Aorta (tissue), 5 donors: ENCODE measurements at regions of chr9 and their contacts with region 1.

Region 1: DNA sequence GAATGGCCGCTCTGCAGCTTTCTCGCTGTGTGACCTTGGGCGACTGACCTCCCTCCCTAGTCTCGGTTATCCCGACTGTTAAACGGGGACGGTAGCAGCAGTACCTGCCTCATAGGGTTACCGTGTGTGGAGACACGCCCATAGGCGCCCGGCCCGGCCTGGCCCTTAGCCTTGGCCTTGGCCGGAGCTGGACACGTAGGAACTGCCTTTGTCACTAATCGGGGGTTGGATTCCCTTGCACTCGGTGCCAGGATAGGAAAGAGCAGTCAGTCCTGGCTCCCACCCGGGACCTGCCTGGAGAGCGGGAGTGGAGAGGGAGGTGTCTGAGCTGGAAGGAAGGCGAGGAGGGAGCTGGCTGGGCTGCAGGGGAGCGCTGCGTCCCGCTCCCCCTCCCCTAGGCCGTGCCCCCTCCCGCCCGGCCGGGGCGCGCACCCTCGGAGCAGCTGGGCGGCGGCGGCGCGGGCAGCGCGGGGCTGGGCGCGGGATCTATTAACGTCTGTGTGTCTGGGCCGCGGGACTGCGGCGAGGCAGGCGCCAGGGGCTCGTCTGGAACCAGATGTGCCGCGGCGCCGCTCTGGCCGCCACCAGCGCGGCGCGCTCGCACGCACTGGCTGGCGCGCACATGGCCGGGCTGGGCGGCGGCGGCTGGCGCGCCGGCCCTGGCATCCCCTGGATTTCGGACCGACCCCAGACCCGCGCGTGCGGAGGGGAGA is 31.6 kb downstream of the PRRX2 start:
- DNase-seq: peak; percentile 88 to 93
- ATAC-seq: peak; percentile 61
- H3K4me3 ChIP-seq: peak overlapping the region; percentile 5 to 16
- H3K27ac ChIP-seq: peak overlapping the region; percentile 88 to 99
- H3K4me1 ChIP-seq: peaks cover 4 to 5% of the 10 kb centered on the region in 2 donors
- H3K27me3 ChIP-seq: no peaks in the 10 kb centered on the region

Region 2: DNA sequence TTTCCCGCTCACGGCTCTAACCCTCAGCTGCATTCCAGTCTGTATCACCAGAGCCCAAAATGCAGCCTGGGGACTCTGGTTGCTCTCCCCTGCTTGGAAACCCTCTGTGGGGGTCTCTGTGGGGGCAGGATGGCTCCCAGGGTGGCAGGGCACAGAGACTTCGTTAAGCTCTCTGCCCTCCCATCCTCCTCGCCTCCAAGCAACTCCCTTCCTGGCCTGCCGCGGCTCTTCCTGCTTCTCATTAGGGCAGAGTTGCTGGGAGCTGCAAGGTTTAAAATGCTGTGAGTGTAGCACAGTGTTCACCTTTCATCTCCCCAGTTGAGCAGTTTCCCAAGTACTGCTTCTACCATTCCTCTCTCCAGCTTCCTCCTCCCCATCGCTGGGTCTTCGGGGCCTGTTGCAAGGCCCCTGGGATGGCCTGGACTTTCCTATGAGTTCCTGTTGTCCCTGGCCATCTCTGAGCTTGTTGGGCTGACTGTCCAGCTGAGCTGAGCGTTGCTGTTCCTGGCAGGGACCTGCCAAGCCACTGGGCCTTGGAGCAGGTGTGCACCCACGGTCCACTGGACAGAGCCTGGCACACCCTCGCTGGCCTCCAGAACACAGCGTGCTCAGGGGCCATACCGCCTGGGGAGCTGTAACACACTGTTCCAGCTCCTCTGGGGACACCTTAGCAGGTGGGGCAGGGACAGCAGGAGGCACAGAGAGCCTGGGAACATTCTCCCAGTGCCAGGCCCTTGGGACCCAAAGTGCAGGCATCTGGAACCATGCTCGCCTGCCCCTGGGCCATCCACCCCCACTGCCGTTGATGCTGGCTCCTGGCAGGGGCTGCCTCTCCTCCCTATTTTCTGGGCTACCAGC is 264.6 kb before region 1 on chr9:
- intact Hi-C with region 1: no loop called
- DNase-seq: no peak
- ATAC-seq: no peak
- H3K4me3 ChIP-seq: no peak overlapping the region
- H3K27ac ChIP-seq: no peak overlapping the region
- H3K4me1 ChIP-seq: no peaks in the 10 kb centered on the region
- H3K27me3 ChIP-seq: no peaks in the 10 kb centered on the region

Region 3: GRCh38 chr9:129648092-129648763 is 48.9 kb before region 1 on chr9:
- intact Hi-C with region 1: loop called in 1 of 2 experiments (anchors 5 kb)
- DNase-seq: peak; percentile 75 to 91
- ATAC-seq: peak; percentile 80
- H3K4me3 ChIP-seq: no peak overlapping the region
- H3K27ac ChIP-seq: peak overlapping the region; percentile 2 to 55
- H3K4me1 ChIP-seq: no peaks in the 10 kb centered on the region
- H3K27me3 ChIP-seq: no peaks in the 10 kb centered on the region

Region 4: GRCh38 chr9:129665389-129665775 is 31.7 kb before region 1 on chr9 and contains the start of gene PRRX2:
- intact Hi-C with region 1: loop called in 1 of 2 experiments (anchors 2 kb)
- DNase-seq: peak; percentile 83 to 91
- ATAC-seq: peak; percentile 80
- H3K4me3 ChIP-seq: peak within 1 kb of the TSS; percentile 85 to 95
- H3K27ac ChIP-seq: peak within 1 kb of the TSS; percentile 52 to 59
- H3K4me1 ChIP-seq: no peaks in the 10 kb centered on the region
- H3K27me3 ChIP-seq: no peaks in the 10 kb centered on the region
- total RNA-seq, gene PRRX2: 51.9 to 68.8 TPM

Region 5: GRCh38 chr9:129712634-129713401 is 15.7 kb after region 1 on chr9:
- intact Hi-C with region 1: loop called in 1 of 2 experiments (anchors 1 kb)
- DNase-seq: peak; percentile 69 to 87
- ATAC-seq: peak; percentile 15
- H3K4me3 ChIP-seq: no peak overlapping the region
- H3K27ac ChIP-seq: peak overlapping the region; percentile 81 to 88
- H3K4me1 ChIP-seq: peaks cover 4% of the 10 kb centered on the region in 2 donors
- H3K27me3 ChIP-seq: no peaks in the 10 kb centered on the region

Region 6: DNA sequence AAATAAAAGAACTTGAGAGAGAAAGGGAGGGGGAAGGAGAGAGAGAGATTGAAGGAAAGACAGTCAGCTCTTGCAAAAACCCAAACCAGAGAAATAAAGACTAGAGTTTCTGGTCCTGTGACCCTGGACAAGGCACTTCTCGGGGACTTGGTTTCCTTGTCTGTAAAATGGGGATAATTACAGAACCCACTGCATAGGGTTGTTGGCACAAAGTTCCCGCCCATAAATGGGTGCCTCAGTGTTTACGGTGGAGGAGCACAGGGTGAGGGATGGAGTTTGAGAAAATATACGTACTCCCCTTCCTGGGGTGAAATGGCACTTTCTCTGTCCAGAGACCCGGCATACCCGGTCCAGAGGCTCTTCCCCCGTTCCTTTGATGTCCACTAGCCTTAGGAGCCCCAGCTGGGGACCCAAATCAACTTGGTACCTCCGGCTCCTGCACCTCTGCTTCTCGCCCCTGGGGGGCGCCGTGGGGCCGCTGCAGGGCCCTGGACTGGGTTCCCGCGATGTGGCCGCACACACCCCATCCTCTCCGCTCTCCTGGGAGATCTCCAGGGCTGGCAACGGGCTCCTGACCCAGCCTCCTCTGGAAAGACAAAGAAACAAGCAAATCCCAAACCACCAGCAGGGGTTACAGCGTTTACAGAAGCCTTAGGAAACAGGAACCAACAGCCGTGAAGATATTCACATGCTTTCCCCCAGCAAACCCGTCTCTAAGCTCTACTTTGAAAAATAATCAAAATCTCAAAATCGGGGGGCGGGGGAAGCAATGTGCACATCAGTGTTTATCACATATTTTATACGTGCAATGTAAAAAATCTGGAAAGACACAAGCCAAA is 29.4 kb after region 1 on chr9:
- intact Hi-C with region 1: loop called in 1 of 2 experiments (anchors 5 kb)
- DNase-seq: peak; percentile 86 to 91
- ATAC-seq: peak; percentile 93
- H3K4me3 ChIP-seq: no peak overlapping the region
- H3K27ac ChIP-seq: peak overlapping the region; percentile 30 to 44
- H3K4me1 ChIP-seq: no peaks in the 10 kb centered on the region
- H3K27me3 ChIP-seq: no peaks in the 10 kb centered on the region